Ascending aorta (tissue), 2 donors: ENCODE measurements at regions of chr11 and their contacts with region 1.

Region 1: GRCh38 chr11:3797329-3798095 is at the start of gene NUP98:
- DNase-seq: peak; percentile 100
- H3K4me3 ChIP-seq: peak within 1 kb of the TSS; percentile 85 to 86
- H3K27ac ChIP-seq: peak within 1 kb of the TSS; percentile 95 to 96
- H3K4me1 ChIP-seq: peaks cover 0 to 21% of the 10 kb centered on the region in 2 donors
- H3K27me3 ChIP-seq: no peaks in the 10 kb centered on the region
- CTCF ChIP-seq: no peak
- total RNA-seq, gene NUP98: 36.3 TPM

Region 2: GRCh38 chr11:3831378-3832239 is 34.1 kb after region 1 on chr11:
- intact Hi-C with region 1: no loop called
- DNase-seq: no peak
- H3K4me3 ChIP-seq: no peak overlapping the region
- H3K27ac ChIP-seq: peak overlapping the region in 1 of 2 donors; percentile 2
- H3K4me1 ChIP-seq: peaks cover 0 to 16% of the 10 kb centered on the region in 2 donors
- H3K27me3 ChIP-seq: no peaks in the 10 kb centered on the region
- CTCF ChIP-seq: no peak

Region 3: GRCh38 chr11:3841426-3842350 is 44.2 kb after region 1 on chr11:
- intact Hi-C with region 1: loop called (anchors 1 kb)
- DNase-seq: peak; percentile 69 to 90
- H3K4me3 ChIP-seq: peak overlapping the region; percentile 98 to 99
- H3K27ac ChIP-seq: peak overlapping the region; percentile 97 to 98
- H3K4me1 ChIP-seq: peaks cover 2 to 7% of the 10 kb centered on the region in 2 donors
- H3K27me3 ChIP-seq: no peaks in the 10 kb centered on the region
- CTCF ChIP-seq: peak; percentile 77 to 92 (median 91)

Region 4: GRCh38 chr11:3947061-3947460 is 149.5 kb after region 1 on chr11:
- intact Hi-C with region 1: no loop called
- DNase-seq: peak in 1 of 2 donors; percentile 67
- H3K4me3 ChIP-seq: no peak overlapping the region
- H3K27ac ChIP-seq: peak overlapping the region; percentile 85 to 88
- H3K4me1 ChIP-seq: peaks cover 51 to 79% of the 10 kb centered on the region in 2 donors
- H3K27me3 ChIP-seq: no peaks in the 10 kb centered on the region
- CTCF ChIP-seq: no peak

Region 5: GRCh38 chr11:4094348-4095291 is 297.1 kb after region 1 on chr11 and contains the start of gene RRM1:
- intact Hi-C with region 1: loop called (anchors 1 kb)
- DNase-seq: peak; percentile 75 to 97
- H3K4me3 ChIP-seq: peak within 1 kb of the TSS; percentile 70 to 82
- H3K27ac ChIP-seq: peak within 1 kb of the TSS; percentile 92 to 94
- H3K4me1 ChIP-seq: peaks cover 9 to 11% of the 10 kb centered on the region in 2 donors
- H3K27me3 ChIP-seq: no peaks in the 10 kb centered on the region
- CTCF ChIP-seq: no peak
- total RNA-seq, gene RRM1: 114 TPM